Sciatic nerve (tissue), 2 donors: ENCODE measurements at regions of chr7 and their contacts with region 1.

Region 1: GRCh38 chr7:5088906-5089305 is 43.2 kb downstream of the RBAK start:
- DNase-seq: no peak
- ATAC-seq: no peak

Region 2: DNA sequence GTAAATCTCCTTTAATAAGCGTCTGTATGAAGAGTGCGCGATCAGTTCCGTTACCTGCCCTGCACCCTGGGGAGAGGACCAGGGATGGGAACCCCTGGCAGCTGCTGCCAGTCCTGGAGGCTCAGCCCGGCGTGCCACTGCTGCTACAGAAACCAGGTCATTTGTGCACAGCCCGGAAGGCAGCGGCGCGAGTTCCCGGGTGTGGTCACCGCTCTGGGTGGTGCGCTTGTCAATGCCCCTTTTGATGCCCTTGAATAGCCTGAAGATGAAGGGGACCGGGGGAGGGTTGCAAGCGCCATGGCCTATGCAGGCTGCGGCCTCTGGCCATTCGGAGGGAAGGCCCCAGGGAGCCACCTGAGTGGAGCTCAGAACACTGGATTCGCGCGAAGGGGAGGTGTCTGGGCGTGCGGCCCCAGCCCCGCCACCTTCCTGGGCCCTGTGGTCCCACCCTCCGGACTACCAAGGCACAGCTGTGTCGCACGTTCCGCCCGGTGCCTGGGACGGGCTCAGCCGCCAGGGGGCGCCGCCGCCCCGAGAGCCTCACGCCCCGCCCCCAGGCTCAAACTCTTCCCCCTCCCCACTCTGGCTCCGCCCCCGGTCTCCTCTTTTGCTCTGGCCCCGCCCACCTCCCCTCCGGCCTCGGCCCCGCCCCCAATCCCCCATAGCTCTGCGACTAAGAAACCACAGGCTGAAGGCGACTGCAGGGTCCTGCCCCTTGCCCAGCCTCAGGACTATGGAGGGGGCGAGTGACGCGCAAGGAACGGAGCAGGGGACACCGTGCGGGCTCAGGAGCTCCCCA is 297.0 kb before region 1 on chr7:
- intact Hi-C with region 1: loop called (anchors 5 kb)
- DNase-seq: peak; percentile 94
- ATAC-seq: peak; percentile 88

Region 3: DNA sequence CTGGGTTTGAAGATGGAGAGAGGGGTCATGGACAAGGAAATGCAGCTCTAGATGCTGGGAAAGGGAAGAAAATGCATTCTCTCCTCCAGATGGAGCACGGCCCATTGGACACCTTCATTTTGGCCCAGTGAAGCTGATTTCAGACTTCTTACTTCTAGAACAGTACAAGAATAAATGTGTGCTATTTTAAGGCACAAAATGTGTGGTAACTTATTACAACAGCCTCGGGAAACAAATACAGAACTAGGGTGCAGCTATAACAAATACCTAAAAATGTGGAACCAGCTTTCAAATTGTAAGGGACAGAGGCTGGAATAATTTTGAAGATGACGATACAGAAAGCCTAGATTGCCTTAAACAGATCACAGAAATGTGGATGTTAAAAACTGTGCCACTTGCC is 1129.4 kb after region 1 on chr7:
- intact Hi-C with region 1: no loop called
- DNase-seq: no peak
- ATAC-seq: no peak